ENCODE measurements at regions of chr11 and their contacts with region 1.

Region 1: DNA sequence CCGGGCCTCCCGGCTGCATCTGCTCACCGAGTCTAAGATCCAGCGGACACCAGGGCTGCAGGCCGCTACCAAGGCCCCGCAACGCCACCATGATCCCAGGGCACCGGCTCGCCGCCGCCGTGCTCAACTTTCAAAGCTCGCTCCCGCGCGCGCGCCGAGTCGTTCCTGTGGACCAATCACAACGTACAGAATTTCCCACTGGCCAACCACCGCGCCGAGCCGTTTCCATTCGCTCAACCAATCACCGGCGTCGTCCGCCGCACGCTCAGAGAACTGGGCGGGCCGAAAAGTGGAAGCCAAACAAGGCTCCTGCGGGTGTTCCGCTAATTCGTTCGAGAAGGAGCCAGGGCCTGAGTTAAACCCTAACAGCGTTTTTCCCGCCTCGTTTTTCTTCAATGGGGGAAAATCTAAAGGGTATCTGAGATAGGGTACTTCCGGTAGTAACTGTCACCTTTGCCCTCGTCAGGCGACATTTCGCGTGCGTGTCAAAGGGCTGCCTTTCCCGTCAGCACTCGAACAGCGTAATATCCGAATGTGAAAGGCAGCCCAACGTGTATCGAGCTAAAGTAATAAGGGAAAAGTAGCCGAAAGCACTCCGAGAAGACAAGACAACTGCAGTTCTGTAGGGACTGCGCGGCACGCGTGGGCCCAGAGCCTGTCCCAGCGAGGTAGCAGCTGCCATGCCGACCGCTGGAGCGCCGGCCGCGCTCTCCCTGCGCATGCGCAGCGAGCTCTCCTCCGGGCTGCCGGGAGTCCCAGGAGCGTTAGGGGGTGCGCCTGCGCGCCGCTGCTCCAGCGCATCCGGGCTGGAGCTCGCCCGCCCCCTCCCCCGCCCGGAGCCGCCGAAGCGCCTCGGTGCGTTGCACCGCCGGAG is at the starts of genes NCAPD3 and VPS26B:
- DNase-seq: peak; percentile 98
- ATAC-seq: peak; percentile 84
- H3K4me3 Mint-ChIP-seq: peak within 1 kb of the TSS; percentile 97
- H3K27ac Mint-ChIP-seq: peak within 1 kb of the TSS; percentile 97
- H3K4me1 Mint-ChIP-seq: peaks cover 70% of the 10 kb centered on the region
- H3K27me3 Mint-ChIP-seq: no peaks in the 10 kb centered on the region
- total RNA-seq, gene NCAPD3: 125 to 136 TPM
- total RNA-seq, gene VPS26B: 55.1 TPM

Region 2: DNA sequence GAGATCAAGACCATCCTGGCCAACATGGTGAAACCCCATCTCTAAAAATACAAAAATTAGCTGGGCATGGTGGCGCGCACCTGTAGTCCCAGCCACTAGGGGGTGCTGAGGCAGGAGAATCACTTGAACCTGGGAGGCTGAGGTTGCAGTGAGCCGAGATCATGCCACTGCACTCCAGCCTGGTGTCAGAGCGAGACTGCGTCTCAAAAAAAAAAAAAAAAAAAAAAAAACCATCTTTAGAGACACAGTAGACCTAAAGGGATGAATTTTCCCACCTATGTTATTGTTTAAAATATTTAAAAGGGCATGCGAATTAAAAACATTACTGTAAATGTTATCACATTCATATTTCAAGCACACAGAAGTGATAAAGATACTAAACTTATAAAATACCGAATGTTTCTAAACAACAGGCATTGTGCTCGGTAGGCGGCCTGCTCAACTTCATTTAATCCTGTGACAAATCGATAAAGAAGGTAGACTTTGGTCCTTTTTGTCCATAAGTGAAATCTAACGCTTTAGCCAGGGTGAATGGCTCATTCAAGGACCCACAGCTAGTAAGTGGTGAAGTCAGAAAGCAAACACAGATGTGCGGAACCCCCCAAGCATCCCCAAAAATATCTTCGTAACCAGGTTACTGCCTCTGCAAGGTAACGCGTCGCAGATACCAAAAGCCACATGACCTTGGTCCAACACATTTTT is 16.4 kb before region 1 on chr11:
- CTCF ChIA-PET with region 1: interaction called, 17 read pairs
- POLR2A ChIA-PET with region 1: interaction called, 6 read pairs
- DNase-seq: peak; percentile 78
- ATAC-seq: peak; percentile 44
- H3K4me3 Mint-ChIP-seq: no peak overlapping the region
- H3K27ac Mint-ChIP-seq: no peak overlapping the region
- H3K4me1 Mint-ChIP-seq: peaks cover 14% of the 10 kb centered on the region
- H3K27me3 Mint-ChIP-seq: no peaks in the 10 kb centered on the region

Region 3: DNA sequence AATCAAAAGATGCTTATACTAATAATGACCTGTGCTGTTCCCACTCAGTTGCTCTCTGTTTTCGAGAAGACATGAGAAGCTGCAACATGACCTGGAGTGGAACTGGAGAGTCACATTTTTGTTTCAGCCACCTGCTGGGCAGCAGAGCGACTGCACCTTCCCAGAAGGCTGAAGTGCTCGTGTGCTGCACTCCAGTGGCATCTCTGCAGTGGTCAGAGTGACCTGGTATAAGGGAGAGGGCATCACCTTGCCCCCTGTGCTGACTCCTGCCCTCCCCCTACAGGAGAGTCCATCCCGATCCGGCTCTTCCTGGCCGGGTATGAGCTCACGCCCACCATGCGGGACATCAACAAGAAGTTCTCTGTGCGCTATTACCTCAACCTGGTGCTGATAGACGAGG is 20.6 kb after region 1 on chr11:
- CTCF ChIA-PET with region 1: interaction called, 25 read pairs
- POLR2A ChIA-PET with region 1: interaction called, 12 read pairs
- DNase-seq: no peak
- ATAC-seq: peak; percentile 77
- H3K4me3 Mint-ChIP-seq: no peak overlapping the region
- H3K27ac Mint-ChIP-seq: no peak overlapping the region
- H3K4me1 Mint-ChIP-seq: peaks cover 8% of the 10 kb centered on the region
- H3K27me3 Mint-ChIP-seq: no peaks in the 10 kb centered on the region

Region 4: DNA sequence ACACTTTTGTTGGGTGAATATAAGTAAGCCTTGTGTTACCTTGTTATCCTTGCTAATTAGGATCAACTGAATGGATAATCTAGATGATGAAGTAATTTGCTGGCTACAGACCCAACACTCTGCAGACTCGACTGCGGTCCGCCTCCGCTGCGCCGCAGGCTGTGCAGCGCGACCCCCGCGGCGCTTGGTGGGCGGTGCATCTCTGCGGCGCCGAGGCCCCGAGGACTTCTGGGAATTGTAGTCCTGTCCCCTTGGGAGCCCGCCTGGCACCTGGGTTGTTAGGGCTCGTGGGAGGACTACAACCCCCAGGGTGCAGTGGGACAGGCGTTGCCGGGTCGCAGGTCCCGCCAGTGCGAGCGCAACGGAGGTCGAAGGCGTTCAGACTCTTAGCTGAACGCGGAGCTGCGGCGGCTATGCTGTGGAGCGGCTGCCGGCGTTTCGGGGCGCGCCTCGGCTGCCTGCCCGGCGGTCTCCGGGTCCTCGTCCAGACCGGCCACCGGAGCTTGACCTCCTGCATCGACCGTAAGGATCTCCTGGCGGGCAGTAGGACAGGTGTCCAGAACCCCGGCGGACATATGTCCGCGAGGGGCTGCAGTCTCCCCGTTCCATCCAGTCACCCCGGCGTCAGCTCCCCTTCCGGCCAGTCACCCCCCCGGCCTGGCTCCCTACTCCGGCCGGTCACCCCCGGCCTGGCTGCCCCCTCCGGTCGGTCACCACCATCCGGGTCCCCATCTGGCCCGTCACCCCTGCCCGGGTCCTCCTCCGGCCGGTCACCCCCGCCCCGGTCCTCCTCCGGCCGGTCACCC is 29.3 kb after region 1 on chr11 and contains the starts of genes ACAD8 and THYN1:
- CTCF ChIA-PET with region 1: interaction called, 6 read pairs
- POLR2A ChIA-PET with region 1: interaction called, 50 read pairs
- DNase-seq: peak; percentile 98
- ATAC-seq: peak; percentile 100
- H3K4me3 Mint-ChIP-seq: peak within 1 kb of the TSS; percentile 86
- H3K27ac Mint-ChIP-seq: peak within 1 kb of the TSS; percentile 89
- H3K4me1 Mint-ChIP-seq: peaks cover 32% of the 10 kb centered on the region
- H3K27me3 Mint-ChIP-seq: no peaks in the 10 kb centered on the region
- total RNA-seq, gene ACAD8: 20.7 to 21.1 TPM
- total RNA-seq, gene THYN1: 53.7 to 56.1 TPM